ENCODE measurements at regions of chr12 and their contacts with region 1.

Region 1: DNA sequence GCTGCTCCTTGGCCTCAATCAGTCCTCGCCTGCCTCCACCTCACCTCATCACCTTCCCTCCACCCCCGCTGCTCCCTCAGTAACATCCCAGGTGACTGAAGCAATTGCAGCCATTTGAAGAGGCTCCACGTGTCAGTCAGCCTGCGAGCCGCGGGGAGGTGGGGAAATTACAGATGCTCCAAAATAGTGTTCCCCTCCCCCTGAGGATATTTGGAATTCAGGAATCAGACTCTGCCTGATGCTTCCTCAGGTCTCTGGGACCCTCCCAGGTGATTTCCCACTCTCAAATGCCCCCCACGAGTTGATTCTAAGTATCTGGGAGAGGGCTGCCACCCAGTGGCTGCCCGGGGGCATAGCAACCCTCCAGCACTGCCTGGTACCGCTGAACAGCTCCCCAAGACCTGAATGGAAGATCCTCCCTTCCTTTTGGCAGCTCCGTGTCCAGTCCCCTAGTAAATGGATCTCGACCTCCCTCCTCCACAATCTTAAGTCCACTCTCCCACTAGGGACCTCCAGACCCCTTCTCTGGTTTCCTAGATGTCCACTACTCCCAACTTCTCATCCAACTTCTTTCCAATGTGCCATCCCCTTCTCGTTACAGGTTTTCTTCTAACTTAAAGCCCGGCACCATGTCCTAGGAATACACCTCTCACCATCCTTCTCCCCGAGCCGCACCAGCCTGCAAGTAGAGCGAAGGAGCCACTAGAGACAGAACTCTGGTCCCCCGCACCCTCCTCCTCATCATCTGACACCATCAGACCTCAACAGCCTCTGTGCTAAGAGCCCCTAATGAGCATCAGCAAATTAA is 1.4 kb upstream of the ASIC1 start:
- DNase-seq: peak; percentile 53 to 75 (median 67)
- H3K4me3 ChIP-seq: peak overlapping the region in 1 of 7 experiments; percentile 55
- H3K27ac ChIP-seq: no peak overlapping the region
- H3K4me1 ChIP-seq: peaks cover 2 to 52% (median 45%) of the 10 kb centered on the region in 4 experiments
- H3K27me3 ChIP-seq: peaks cover 0 to 28% (median 25%) of the 10 kb centered on the region in 5 experiments

Region 2: DNA sequence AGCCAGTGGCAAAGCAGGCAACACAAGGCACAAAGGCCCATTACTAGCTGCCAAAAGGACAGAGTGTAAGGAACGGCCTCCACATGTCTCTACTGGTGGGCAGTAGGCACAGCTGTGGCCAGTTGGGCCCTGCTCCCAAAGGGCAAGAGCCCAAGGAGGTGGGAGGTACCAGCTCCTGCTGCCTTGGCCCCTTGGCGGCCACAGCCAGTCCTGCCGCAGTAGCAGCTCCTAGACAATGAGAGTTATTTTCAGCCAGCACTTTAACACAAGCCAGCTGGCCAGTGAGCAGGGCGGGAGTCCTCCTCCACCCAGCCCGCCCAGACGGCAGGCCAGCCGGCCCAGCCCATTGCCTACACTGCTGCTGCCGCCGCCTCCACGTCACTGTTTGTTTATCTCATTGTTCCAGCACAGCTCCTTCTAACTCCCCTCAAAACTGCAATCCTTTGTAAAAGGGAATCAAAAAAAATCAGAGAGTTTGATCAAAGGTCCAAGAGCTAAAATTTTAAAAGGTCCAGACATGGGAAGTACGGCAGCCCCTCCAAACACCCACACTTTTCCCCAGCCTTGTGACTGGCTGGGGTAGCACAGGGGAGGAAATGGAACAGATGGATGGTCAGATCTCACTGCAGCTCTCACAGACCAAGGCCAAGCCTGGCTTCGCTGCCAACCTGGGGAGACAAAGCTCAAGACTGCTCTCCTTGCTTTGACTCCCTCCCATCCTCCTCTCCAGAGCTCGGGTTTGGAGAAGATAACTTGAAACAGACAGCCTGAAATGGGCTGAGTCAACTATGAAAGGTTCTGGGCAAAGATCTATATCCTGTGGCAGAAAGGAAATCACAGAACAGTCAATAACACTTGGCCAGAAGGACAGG is 382.4 kb before region 1 on chr12:
- CTCF ChIA-PET with region 1: no interaction called
- POLR2A ChIA-PET with region 1: no interaction called
- DNase-seq: peak in 2 of 3 donors; percentile 24 to 54
- H3K4me3 ChIP-seq: no peak overlapping the region
- H3K27ac ChIP-seq: peak overlapping the region in 1 of 2 experiments; percentile 51
- H3K4me1 ChIP-seq: peaks cover 15 to 59% (median 50%) of the 10 kb centered on the region in 4 experiments
- H3K27me3 ChIP-seq: no peaks in the 10 kb centered on the region

Region 3: GRCh38 chr12:49974677-49975317 is 81.2 kb before region 1 on chr12:
- CTCF ChIA-PET with region 1: interaction called, 72 read pairs
- POLR2A ChIA-PET with region 1: no interaction called
- DNase-seq: no peak
- H3K4me3 ChIP-seq: peak overlapping the region in 1 of 7 experiments; percentile 1
- H3K27ac ChIP-seq: no peak overlapping the region
- H3K4me1 ChIP-seq: peaks cover 0 to 16% (median 6%) of the 10 kb centered on the region in 4 experiments
- H3K27me3 ChIP-seq: no peaks in the 10 kb centered on the region

Region 4: GRCh38 chr12:50032639-50033581 is 23.1 kb before region 1 on chr12:
- CTCF ChIA-PET with region 1: interaction called, 269 read pairs
- POLR2A ChIA-PET with region 1: no interaction called
- DNase-seq: peak in 2 of 3 donors; percentile 67 to 74
- H3K4me3 ChIP-seq: peak overlapping the region; percentile 39 to 82 (median 61)
- H3K27ac ChIP-seq: no peak overlapping the region
- H3K4me1 ChIP-seq: peaks cover 0 to 18% (median 14%) of the 10 kb centered on the region in 4 experiments
- H3K27me3 ChIP-seq: no peaks in the 10 kb centered on the region

Region 5: GRCh38 chr12:50043854-50044253 is 12.2 kb before region 1 on chr12:
- CTCF ChIA-PET with region 1: interaction called, 269 read pairs
- POLR2A ChIA-PET with region 1: no interaction called
- DNase-seq: no peak
- H3K4me3 ChIP-seq: no peak overlapping the region
- H3K27ac ChIP-seq: no peak overlapping the region
- H3K4me1 ChIP-seq: peaks cover 0 to 3% (median 0%) of the 10 kb centered on the region in 4 experiments
- H3K27me3 ChIP-seq: peaks cover 0 to 10% (median 0%) of the 10 kb centered on the region in 5 experiments

Region 6: DNA sequence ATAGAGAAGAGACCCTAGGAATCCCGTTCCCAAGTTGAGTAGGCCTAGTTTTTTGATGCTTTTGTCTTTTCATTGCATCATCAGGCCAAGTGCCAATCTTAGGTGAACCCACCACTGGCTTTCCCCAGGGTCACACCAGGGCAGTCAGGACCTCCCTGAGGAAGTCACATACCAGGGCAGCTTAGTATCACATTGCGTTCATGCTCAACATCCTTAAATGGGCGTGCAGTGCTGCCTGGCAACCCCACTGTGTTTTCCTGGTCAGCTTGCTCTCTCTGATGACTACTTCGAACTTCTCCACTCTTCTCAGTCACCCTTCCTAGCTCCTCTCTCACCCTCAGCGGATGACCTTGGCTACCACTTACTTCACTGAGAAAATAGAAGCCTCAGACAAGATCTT is 10.4 kb after region 1 on chr12:
- CTCF ChIA-PET with region 1: interaction called, 51 read pairs
- POLR2A ChIA-PET with region 1: no interaction called
- DNase-seq: peak in 2 of 3 donors; percentile 50 to 55
- H3K4me3 ChIP-seq: no peak overlapping the region
- H3K27ac ChIP-seq: no peak overlapping the region
- H3K4me1 ChIP-seq: peaks cover 0 to 10% (median under 1%) of the 10 kb centered on the region in 4 experiments
- H3K27me3 ChIP-seq: peaks cover 0 to 8% (median 4%) of the 10 kb centered on the region in 5 experiments

Measured in common myeloid progenitor, CD34-positive (primary cell).